ENCODE measurements at regions of chr12 and their contacts with region 1.

Region 1: DNA sequence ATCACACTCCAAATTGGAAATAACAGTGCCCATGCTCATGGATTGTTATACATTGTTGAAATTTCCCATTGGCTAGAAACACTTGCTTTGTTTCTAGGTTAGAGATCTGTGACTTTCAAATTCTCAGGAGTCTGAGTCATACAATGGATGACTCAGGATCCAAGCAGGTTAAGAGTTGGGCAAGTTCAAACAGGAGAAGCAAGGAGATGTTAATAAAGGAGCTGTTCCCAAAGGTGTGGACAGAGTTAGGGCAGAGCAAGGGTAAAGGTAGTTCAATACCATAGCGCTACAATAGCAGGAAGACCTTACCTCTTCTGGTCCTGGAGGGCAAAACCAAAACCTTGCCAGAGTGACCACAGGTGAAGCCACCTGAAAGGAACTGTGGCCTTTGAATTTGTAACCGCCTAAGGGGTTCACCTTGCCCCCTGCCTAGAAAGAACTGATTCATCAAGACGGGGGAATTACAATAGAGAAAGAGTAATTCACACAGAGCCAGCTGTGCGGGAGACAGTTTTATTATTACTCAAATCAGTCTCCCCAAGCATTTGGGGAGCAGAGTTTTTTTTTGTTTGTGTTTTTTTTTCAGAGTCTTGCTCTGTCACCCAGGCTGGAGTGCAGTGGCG is 4.2 kb upstream of the AMN1 start:
- H3K4me3 ChIP-seq: no peak overlapping the region
- H3K27ac ChIP-seq: peak overlapping the region; percentile 66
- H3K4me1 ChIP-seq: no peaks in the 10 kb centered on the region; the same call in 1 of the 2 replicates
- CTCF ChIP-seq: no peak

Region 2: GRCh38 chr12:31749024-31749704 is 16.1 kb after region 1 on chr12:
- CTCF ChIA-PET with region 1: interaction called, 3 read pairs
- POLR2A ChIA-PET with region 1: interaction called, 10 read pairs
- H3K4me3 ChIP-seq: no peak overlapping the region
- H3K27ac ChIP-seq: peak overlapping the region; percentile 55; the same call in 1 of the 2 replicates
- H3K4me1 ChIP-seq: no peaks in the 10 kb centered on the region
- CTCF ChIP-seq: no peak